MCF 10A (cell line): ENCODE measurements at regions of chr16 and their contacts with region 1.

Region 1: DNA sequence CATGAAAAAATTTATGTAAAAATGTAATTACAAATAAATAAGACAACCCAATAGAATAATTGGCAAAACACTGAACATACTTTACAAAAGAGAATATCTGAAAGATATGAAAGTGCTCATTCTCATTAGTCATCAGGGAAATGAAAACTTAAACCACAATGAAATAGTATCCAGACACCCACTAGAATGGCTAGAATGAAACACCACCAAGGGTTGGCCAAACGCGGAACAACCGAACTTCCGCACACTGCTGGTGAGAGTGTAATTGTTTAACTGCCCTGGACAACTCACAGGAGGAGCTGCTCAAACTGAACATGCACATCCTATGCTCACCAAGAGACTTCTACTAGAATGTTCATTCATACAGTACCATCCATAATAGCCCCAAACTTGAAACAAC is 5.8 kb upstream of the ZDHHC7 start:
- DNase-seq: no peak
- H3K4me3 Mint-ChIP-seq: no peak overlapping the region
- H3K27ac Mint-ChIP-seq: no peak overlapping the region
- H3K4me1 Mint-ChIP-seq: peaks cover 15% of the 10 kb centered on the region
- H3K27me3 Mint-ChIP-seq: no peaks in the 10 kb centered on the region
- CTCF ChIP-seq: no peak

Region 2: GRCh38 chr16:83606486-83607030 is 1410.6 kb before region 1 on chr16:
- CTCF ChIA-PET with region 1: no interaction called
- POLR2A ChIA-PET with region 1: no interaction called
- intact Hi-C with region 1: no loop called
- DNase-seq: no peak
- H3K4me3 Mint-ChIP-seq: no peak overlapping the region
- H3K27ac Mint-ChIP-seq: no peak overlapping the region
- H3K4me1 Mint-ChIP-seq: no peaks in the 10 kb centered on the region
- H3K27me3 Mint-ChIP-seq: no peaks in the 10 kb centered on the region
- CTCF ChIP-seq: no peak

Region 3: GRCh38 chr16:85004559-85005205 is 12.5 kb before region 1 on chr16:
- CTCF ChIA-PET with region 1: interaction called, 4 read pairs
- POLR2A ChIA-PET with region 1: interaction called, 336 read pairs
- intact Hi-C with region 1: no loop called
- DNase-seq: peak; percentile 56
- H3K4me3 Mint-ChIP-seq: peak overlapping the region; percentile 50
- H3K27ac Mint-ChIP-seq: peak overlapping the region; percentile 93
- H3K4me1 Mint-ChIP-seq: peaks cover 61% of the 10 kb centered on the region
- H3K27me3 Mint-ChIP-seq: no peaks in the 10 kb centered on the region
- CTCF ChIP-seq: no peak